CD14-positive monocyte (primary cell): ENCODE measurements at regions of chr12 and their contacts with region 1.

Region 1: GRCh38 chr12:124625867-124626675 is 58.7 kb upstream of the NCOR2 start:
- DNase-seq: peak; percentile 94 to 98 (median 95)
- H3K4me3 ChIP-seq: peak overlapping the region in 2 of 3 experiments; percentile 15 to 69
- H3K4me3 Mint-ChIP-seq: peak overlapping the region; percentile 78 to 89
- H3K27ac ChIP-seq: peak overlapping the region; percentile 96 to 97
- H3K27ac Mint-ChIP-seq: peak overlapping the region; percentile 97 to 100 (median 99)
- H3K4me1 ChIP-seq: peaks cover 58 to 65% of the 10 kb centered on the region in 2 donors
- H3K4me1 Mint-ChIP-seq: peaks cover 69% of the 10 kb centered on the region
- H3K27me3 ChIP-seq: no peaks in the 10 kb centered on the region
- H3K27me3 Mint-ChIP-seq: no peaks in the 10 kb centered on the region
- CTCF ChIP-seq: no peak

Region 2: GRCh38 chr12:124259154-124260066 is 366.7 kb before region 1 on chr12:
- intact Hi-C with region 1: no loop called
- DNase-seq: peak in 2 of 3 donors; percentile 14 to 18
- H3K4me3 ChIP-seq: peak overlapping the region in 1 of 3 experiments; percentile 23
- H3K4me3 Mint-ChIP-seq: peak overlapping the region in 1 of 2 donors; percentile 81
- H3K27ac ChIP-seq: no peak overlapping the region
- H3K27ac Mint-ChIP-seq: peak overlapping the region in 1 of 7 donors; percentile 49
- H3K4me1 ChIP-seq: peaks cover 11 to 21% of the 10 kb centered on the region in 2 donors
- H3K4me1 Mint-ChIP-seq: peaks cover 28% of the 10 kb centered on the region
- H3K27me3 ChIP-seq: peaks cover 0 to 3% of the 10 kb centered on the region in 2 donors
- H3K27me3 Mint-ChIP-seq: peaks cover 3 to 22% (median 7%) of the 10 kb centered on the region in 3 donors
- CTCF ChIP-seq: no peak

Region 3: DNA sequence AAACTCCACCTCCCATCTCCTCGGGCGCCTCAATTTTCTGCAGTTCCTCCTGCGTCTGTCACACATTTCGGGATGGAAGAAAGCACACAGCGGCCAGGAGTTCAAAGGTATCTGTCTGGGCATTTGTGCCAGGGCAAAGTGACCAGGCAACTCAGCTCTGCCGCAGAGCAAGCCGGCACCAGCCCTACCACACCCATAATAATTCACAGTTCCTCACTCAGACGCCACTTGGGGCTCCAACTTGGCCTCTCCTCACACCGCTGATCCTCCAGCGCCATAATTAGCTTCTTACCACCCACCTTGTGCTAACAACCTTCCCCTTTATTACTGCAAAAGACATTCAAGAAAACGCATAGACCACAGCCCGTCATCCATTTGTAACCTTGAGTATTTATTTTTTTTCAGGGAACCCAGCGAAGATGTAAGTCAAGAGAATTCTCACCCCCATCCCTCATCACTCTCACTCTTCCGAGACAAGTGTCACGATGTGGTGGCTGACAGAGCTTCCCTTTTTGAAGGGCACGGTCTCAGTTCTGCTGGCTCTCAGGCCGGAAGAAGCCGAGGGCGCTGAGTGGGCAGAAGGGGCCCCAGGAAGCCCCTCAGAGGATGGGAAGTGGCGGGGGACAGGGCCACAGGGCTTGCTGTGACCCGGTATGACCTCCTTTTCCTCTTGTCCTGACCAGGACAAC is 33.5 kb before region 1 on chr12:
- intact Hi-C with region 1: loop called in 1 of 2 experiments (anchors 5 kb)
- DNase-seq: peak; percentile 83 to 85 (median 84)
- H3K4me3 ChIP-seq: peak overlapping the region in 1 of 3 experiments; percentile 38
- H3K4me3 Mint-ChIP-seq: peak overlapping the region; percentile 54 to 76
- H3K27ac ChIP-seq: peak overlapping the region; percentile 75 to 87
- H3K27ac Mint-ChIP-seq: peak overlapping the region; percentile 87 to 99 (median 93)
- H3K4me1 ChIP-seq: peaks cover 38 to 53% of the 10 kb centered on the region in 2 donors
- H3K4me1 Mint-ChIP-seq: peaks cover 57% of the 10 kb centered on the region
- H3K27me3 ChIP-seq: no peaks in the 10 kb centered on the region
- H3K27me3 Mint-ChIP-seq: peaks cover 2 to 9% (median 9%) of the 10 kb centered on the region in 3 donors
- CTCF ChIP-seq: no peak

Region 4: DNA sequence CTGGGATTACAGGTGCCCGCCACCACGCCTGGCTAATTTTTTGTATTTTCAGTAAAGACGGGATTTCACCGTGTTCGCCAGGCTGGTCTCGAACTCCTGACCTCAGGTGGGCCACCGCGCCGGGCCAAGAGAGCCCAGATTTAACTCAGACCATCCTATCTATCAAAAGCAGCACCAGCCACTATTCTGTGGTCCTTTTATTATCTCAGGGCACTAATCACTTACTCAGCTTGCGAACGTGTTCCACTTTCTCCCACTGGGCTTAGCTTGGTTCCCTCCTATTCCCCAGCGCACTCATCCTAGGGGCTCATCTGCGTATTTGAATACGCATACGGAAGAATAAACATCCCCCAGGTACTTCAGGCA is 423.0 kb after region 1 on chr12:
- intact Hi-C with region 1: no loop called
- DNase-seq: no peak
- H3K4me3 ChIP-seq: peak overlapping the region; percentile 38 to 89 (median 55)
- H3K4me3 Mint-ChIP-seq: peak overlapping the region; percentile 84 to 93
- H3K27ac ChIP-seq: peak overlapping the region in 1 of 2 donors; percentile 56
- H3K27ac Mint-ChIP-seq: peak overlapping the region in 3 of 7 donors; percentile 28 to 78 (median 40)
- H3K4me1 ChIP-seq: peaks cover 10 to 12% of the 10 kb centered on the region in 2 donors
- H3K4me1 Mint-ChIP-seq: peaks cover 5% of the 10 kb centered on the region
- H3K27me3 ChIP-seq: no peaks in the 10 kb centered on the region
- H3K27me3 Mint-ChIP-seq: peaks cover 3% of the 10 kb centered on the region in 3 donors
- CTCF ChIP-seq: no peak